ENCODE measurements at regions of chr2 and their contacts with region 1.

Region 1: DNA sequence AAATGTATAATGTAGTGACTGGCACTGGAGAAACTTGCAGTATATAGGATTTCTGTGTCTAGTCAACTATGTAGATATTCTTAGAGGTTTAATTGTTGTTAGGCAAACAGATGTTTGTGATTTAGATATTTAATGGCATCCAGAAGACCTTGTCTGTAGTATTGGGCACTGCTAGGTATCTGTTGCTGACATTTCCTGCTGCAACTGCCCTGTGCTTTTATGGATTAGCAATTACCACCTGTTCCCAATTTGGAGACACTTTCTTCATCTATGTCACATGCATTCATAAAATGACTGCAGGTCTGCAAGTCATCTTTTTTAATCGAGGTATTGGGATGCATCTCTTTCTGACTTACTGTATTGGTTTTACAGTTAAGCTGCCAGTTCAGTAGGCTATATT is 71.3 kb downstream of the ITGA4 start:
- DNase-seq: no peak
- ATAC-seq: no peak
- H3K4me3 ChIP-seq: no peak overlapping the region
- H3K27ac ChIP-seq: no peak overlapping the region
- H3K4me1 ChIP-seq: no peaks in the 10 kb centered on the region
- H3K27me3 ChIP-seq: no peaks in the 10 kb centered on the region

Region 2: GRCh38 chr2:181203412-181203811 is 325.0 kb before region 1 on chr2:
- intact Hi-C with region 1: no loop called
- DNase-seq: no peak
- ATAC-seq: no peak
- H3K4me3 ChIP-seq: no peak overlapping the region
- H3K27ac ChIP-seq: no peak overlapping the region
- H3K4me1 ChIP-seq: no peaks in the 10 kb centered on the region
- H3K27me3 ChIP-seq: peaks cover 0 to 2% of the 10 kb centered on the region in 2 donors

Region 3: GRCh38 chr2:181281206-181281832 is 247.1 kb before region 1 on chr2:
- intact Hi-C with region 1: no loop called
- DNase-seq: no peak
- ATAC-seq: no peak
- H3K4me3 ChIP-seq: no peak overlapping the region
- H3K27ac ChIP-seq: no peak overlapping the region
- H3K4me1 ChIP-seq: no peaks in the 10 kb centered on the region
- H3K27me3 ChIP-seq: no peaks in the 10 kb centered on the region

Region 4: GRCh38 chr2:181380581-181380980 is 147.9 kb before region 1 on chr2:
- intact Hi-C with region 1: no loop called
- DNase-seq: no peak
- ATAC-seq: no peak
- H3K4me3 ChIP-seq: no peak overlapping the region
- H3K27ac ChIP-seq: no peak overlapping the region
- H3K4me1 ChIP-seq: peaks cover 0 to 1% of the 10 kb centered on the region in 2 donors
- H3K27me3 ChIP-seq: no peaks in the 10 kb centered on the region

Region 5: DNA sequence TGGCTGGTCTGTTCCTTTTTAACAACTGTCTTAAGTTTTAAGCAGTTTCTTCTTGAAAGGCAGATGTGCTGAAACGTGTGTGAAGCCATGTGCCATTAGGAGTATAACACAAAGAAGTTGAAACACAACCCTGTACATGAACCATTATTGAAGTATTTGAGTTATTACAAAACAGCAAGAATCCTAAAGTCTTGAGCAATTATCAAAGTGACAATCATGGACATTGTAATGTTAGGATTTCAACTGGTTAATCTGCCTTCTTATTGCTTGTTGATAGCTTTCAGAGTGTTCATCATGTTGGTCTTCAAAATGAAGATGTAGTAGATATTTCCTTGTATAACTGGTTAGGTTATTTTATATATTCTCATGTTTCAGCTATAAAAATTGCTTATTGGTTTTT is 478.2 kb after region 1 on chr2:
- intact Hi-C with region 1: loop called in 1 of 2 experiments (anchors 5 kb)
- DNase-seq: no peak
- ATAC-seq: no peak
- H3K4me3 ChIP-seq: no peak overlapping the region
- H3K27ac ChIP-seq: no peak overlapping the region
- H3K4me1 ChIP-seq: no peaks in the 10 kb centered on the region
- H3K27me3 ChIP-seq: no peaks in the 10 kb centered on the region

Region 6: GRCh38 chr2:182616471-182617393 is 1088.3 kb after region 1 on chr2:
- intact Hi-C with region 1: no loop called
- DNase-seq: no peak
- ATAC-seq: no peak
- H3K4me3 ChIP-seq: no peak overlapping the region
- H3K27ac ChIP-seq: no peak overlapping the region
- H3K4me1 ChIP-seq: peaks cover 0 to 5% of the 10 kb centered on the region in 2 donors
- H3K27me3 ChIP-seq: no peaks in the 10 kb centered on the region